Activated CD4-positive, alpha-beta T cell treated with anti-CD3 and anti-CD28 coated beads for 36 hours (primary cell): ENCODE measurements at regions of chr12 and their contacts with region 1.

Region 1: DNA sequence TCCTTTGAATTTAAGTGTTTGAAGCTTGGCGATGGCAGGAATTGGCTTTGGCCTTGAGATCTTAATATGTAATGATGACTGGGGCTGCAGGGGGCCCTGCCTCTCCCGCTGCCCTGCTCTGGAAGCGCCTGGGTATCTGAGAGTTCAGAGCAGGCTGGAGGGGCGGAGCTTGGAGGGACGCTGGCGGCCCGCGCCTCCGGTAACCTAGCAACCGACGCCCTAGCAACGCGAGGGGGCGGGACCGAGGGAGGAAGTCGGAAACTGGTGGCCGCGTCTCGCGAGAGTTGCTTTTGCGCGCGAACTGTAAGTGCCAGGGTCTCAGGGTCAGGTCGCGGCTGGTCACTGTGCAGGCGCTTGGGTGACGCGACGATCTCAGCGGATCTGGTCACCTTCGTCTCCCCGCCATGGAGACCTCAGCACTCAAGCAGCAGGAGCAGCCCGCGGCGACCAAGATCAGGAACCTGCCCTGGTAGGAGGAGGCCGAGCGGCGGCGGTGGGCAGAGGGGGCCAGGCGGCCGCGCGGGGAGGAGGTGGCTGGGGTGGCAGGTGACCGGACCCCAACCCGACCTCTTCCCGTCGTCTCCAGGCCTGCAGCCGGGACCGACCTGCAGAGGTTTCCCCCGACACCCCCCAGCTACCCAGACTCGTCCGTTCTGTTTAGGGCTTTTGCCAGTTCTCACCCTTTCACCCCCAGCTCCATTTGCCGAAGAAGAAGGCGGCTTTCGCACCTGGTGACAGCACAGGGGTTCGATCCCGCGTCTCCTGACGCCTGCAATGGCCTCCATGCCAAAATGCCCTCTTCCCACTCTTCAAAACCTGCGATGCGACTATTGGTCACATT is at the start of gene RFC5:
- DNase-seq: peak; percentile 99
- ATAC-seq: peak; percentile 98
- H3K4me3 Mint-ChIP-seq: peak within 1 kb of the TSS; percentile 97
- H3K27ac Mint-ChIP-seq: peak within 1 kb of the TSS; percentile 90
- H3K4me1 Mint-ChIP-seq: peaks cover 15% of the 10 kb centered on the region
- H3K27me3 Mint-ChIP-seq: no peaks in the 10 kb centered on the region
- total RNA-seq, gene RFC5: 63.0 to 78.9 TPM

Region 2: GRCh38 chr12:117190210-117190781 is 826.3 kb before region 1 on chr12 and contains the start of gene FBXO21:
- CTCF ChIA-PET with region 1: no interaction called
- POLR2A ChIA-PET with region 1: no interaction called
- intact Hi-C with region 1: loop called in 1 of 2 experiments (anchors 1 kb)
- DNase-seq: peak; percentile 96
- ATAC-seq: peak; percentile 97
- H3K4me3 Mint-ChIP-seq: peak within 1 kb of the TSS; percentile 95
- H3K27ac Mint-ChIP-seq: peak within 1 kb of the TSS; percentile 90
- H3K4me1 Mint-ChIP-seq: peaks cover 27% of the 10 kb centered on the region
- H3K27me3 Mint-ChIP-seq: no peaks in the 10 kb centered on the region
- total RNA-seq, gene FBXO21: 22.8 to 28.2 TPM

Region 3: GRCh38 chr12:117975006-117975405 is 41.6 kb before region 1 on chr12:
- CTCF ChIA-PET with region 1: no interaction called
- POLR2A ChIA-PET with region 1: no interaction called
- intact Hi-C with region 1: no loop called
- DNase-seq: no peak
- ATAC-seq: no peak
- H3K4me3 Mint-ChIP-seq: no peak overlapping the region
- H3K27ac Mint-ChIP-seq: no peak overlapping the region
- H3K4me1 Mint-ChIP-seq: no peaks in the 10 kb centered on the region
- H3K27me3 Mint-ChIP-seq: peaks cover 29% of the 10 kb centered on the region

Region 4: DNA sequence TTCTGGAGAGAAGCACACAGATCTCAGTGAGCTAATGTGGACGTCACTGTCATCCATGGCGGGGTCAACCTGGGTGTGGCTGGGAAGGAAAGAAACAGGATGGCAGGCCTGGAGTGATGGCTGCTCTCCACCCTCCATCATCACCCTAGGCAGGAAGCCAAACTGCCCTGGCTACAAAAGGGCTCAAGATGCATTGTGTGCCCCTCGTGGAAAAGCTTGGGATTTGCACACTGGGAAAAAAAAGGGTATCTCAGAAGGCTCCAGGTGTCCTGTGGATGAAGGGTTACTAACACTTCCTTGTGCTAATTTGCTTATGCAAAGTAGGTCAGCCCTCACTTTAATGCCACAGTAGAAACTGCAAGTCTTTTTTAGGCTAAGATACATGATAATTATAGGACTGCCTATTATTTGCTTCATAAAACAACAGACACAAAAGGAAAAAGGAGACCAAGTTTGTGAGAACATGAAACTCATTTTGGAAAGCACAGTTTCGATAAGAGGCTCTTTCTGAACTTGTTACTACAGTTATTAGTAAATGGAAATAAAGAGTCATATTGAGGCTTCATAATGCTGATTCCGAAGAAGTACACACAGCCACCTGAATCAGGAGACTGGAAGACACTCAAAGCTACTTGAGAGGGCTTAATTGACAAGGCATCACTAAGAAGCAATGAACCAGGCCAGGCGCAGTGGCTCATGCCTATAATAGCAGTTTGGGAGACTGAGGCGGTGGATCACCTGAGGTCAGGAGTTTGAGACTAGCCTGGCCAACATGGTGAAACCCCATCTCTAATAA is 18.8 kb after region 1 on chr12:
- CTCF ChIA-PET with region 1: interaction called, 8 read pairs
- POLR2A ChIA-PET with region 1: interaction called, 3 read pairs
- intact Hi-C with region 1: loop called (anchors 1 kb)
- DNase-seq: peak; percentile 60
- ATAC-seq: peak; percentile 89
- H3K4me3 Mint-ChIP-seq: peak overlapping the region; percentile 22
- H3K27ac Mint-ChIP-seq: peak overlapping the region; percentile 89
- H3K4me1 Mint-ChIP-seq: peaks cover 55% of the 10 kb centered on the region
- H3K27me3 Mint-ChIP-seq: no peaks in the 10 kb centered on the region

Region 5: DNA sequence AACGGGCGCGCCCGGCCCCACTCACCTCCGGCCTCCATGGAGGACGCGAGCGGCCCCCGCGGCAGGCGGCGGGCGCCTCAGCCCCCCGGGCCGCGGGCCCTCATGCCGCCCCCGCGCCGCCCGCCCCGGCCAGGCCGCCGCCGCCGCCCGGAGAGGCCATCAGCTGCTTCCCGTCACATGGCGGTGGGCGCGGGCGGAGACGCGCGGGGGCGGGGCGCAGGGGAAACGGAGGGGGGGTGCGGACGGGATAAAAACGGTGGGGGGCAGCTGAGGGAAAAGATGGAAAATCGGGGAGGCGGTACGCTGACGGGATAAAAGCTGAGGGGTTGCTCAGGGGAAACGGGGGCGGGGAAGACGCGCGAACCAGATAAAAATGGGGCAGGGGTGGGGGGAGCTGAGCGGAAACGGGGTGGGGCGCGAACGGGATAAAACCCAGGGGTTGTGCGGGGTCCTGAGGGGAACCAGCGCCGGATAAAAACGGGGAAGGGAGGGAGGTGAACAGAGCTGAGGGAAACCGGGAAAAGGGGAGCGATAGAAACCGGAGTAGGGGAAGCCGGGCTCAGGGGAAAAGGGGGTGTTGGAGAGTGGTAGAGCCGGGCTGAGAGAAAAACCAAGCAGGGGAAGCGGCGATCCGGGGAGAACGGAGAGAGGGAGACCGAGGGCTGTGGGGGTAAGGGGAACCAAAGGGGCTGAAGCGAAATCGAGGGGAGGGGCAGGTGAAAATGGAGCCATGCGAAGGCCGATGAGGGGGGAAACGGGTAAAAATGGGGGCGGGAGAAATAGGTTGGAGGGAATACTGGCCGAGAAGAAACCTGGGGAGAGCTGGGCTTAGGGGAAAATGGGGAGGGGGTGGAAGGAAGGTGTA is 44.6 kb after region 1 on chr12 and contains the start of gene WSB2:
- CTCF ChIA-PET with region 1: interaction called, 7 read pairs
- POLR2A ChIA-PET with region 1: interaction called, 3 read pairs
- intact Hi-C with region 1: loop called (anchors 1 to 2 kb)
- DNase-seq: peak; percentile 73
- ATAC-seq: peak; percentile 8
- H3K4me3 Mint-ChIP-seq: peak within 1 kb of the TSS; percentile 88
- H3K27ac Mint-ChIP-seq: peak within 1 kb of the TSS; percentile 97
- H3K4me1 Mint-ChIP-seq: peaks cover 47% of the 10 kb centered on the region
- H3K27me3 Mint-ChIP-seq: peaks cover 2% of the 10 kb centered on the region
- total RNA-seq, gene WSB2: 57.7 to 58.2 TPM

Region 6: GRCh38 chr12:119667577-119668323 is 1651.1 kb after region 1 on chr12 and contains the start of gene PRKAB1:
- CTCF ChIA-PET with region 1: no interaction called
- POLR2A ChIA-PET with region 1: no interaction called
- intact Hi-C with region 1: loop called in 1 of 2 experiments (anchors 2 kb)
- DNase-seq: peak; percentile 98
- ATAC-seq: peak; percentile 96
- H3K4me3 Mint-ChIP-seq: peak within 1 kb of the TSS; percentile 91
- H3K27ac Mint-ChIP-seq: peak within 1 kb of the TSS; percentile 91
- H3K4me1 Mint-ChIP-seq: peaks cover 48% of the 10 kb centered on the region
- H3K27me3 Mint-ChIP-seq: no peaks in the 10 kb centered on the region
- total RNA-seq, gene PRKAB1: 18.0 to 21.7 TPM